PC-3 (cell line): ENCODE measurements at regions of chrX and their contacts with region 1.

Region 1: GRCh38 chrX:105314466-105314865 is 94.0 kb upstream of the TEX13A start:
- DNase-seq: peak; percentile 91
- ATAC-seq: peak; percentile 92
- H3K4me3 ChIP-seq: peak overlapping the region; percentile 61
- H3K27ac ChIP-seq: peak overlapping the region; percentile 95
- H3K4me1 ChIP-seq: peaks cover 36% of the 10 kb centered on the region
- H3K27me3 ChIP-seq: no peaks in the 10 kb centered on the region
- CTCF ChIP-seq: no peak

Region 2: DNA sequence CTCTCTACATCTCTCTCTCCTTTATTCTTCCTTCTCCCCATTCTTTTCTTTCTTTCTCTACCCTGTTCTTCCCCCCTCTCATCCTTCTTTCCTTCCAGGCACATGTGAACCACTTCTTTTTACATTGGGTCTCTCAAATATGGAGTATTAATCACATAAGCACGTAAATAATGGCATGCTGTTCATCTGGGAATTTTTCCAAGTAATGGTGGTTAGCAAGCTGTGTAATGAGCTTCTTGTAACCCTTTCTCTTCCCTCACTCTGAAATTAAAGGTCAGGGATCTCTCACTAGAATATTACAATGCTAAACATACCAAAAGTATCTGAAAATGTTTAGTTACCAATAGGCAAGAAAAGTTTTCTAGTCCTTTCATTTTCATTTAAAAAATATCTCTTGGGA is 145.9 kb after region 1 on chrX:
- CTCF ChIA-PET with region 1: no interaction called
- POLR2A ChIA-PET with region 1: no interaction called
- intact Hi-C with region 1: loop called (anchors 5 kb)
- DNase-seq: peak; percentile 30
- ATAC-seq: no peak; the same call in 1 of the 2 replicates
- H3K4me3 ChIP-seq: peak overlapping the region; percentile 10; the same call in 1 of the 2 replicates
- H3K27ac ChIP-seq: no peak overlapping the region
- H3K4me1 ChIP-seq: peaks cover 14% of the 10 kb centered on the region
- H3K27me3 ChIP-seq: no peaks in the 10 kb centered on the region
- CTCF ChIP-seq: no peak